ENCODE measurements at regions of chr18 and their contacts with region 1.

Region 1: GRCh38 chr18:10560450-10561045 is 34.7 kb downstream of the NAPG start:
- DNase-seq: peak; percentile 79
- H3K4me3 Mint-ChIP-seq: no peak overlapping the region
- H3K27ac Mint-ChIP-seq: no peak overlapping the region
- H3K4me1 Mint-ChIP-seq: no peaks in the 10 kb centered on the region
- H3K27me3 Mint-ChIP-seq: no peaks in the 10 kb centered on the region
- CTCF ChIP-seq: peak; percentile 78

Region 2: GRCh38 chr18:10715791-10716190 is 155.2 kb after region 1 on chr18:
- CTCF ChIA-PET with region 1: interaction called, 5 read pairs
- intact Hi-C with region 1: loop called (anchors 10 kb)
- DNase-seq: peak; percentile 46
- H3K4me3 Mint-ChIP-seq: no peak overlapping the region
- H3K27ac Mint-ChIP-seq: peak overlapping the region; percentile 38
- H3K4me1 Mint-ChIP-seq: peaks cover 11% of the 10 kb centered on the region
- H3K27me3 Mint-ChIP-seq: peaks cover 7% of the 10 kb centered on the region
- CTCF ChIP-seq: no peak

Region 3: GRCh38 chr18:10739152-10739551 is 178.6 kb after region 1 on chr18:
- CTCF ChIA-PET with region 1: no interaction called
- intact Hi-C with region 1: no loop called
- DNase-seq: no peak
- H3K4me3 Mint-ChIP-seq: no peak overlapping the region
- H3K27ac Mint-ChIP-seq: peak overlapping the region; percentile 67
- H3K4me1 Mint-ChIP-seq: no peaks in the 10 kb centered on the region
- H3K27me3 Mint-ChIP-seq: no peaks in the 10 kb centered on the region
- CTCF ChIP-seq: no peak

Region 4: GRCh38 chr18:10787293-10787901 is 226.8 kb after region 1 on chr18:
- CTCF ChIA-PET with region 1: interaction called, 4 read pairs
- intact Hi-C with region 1: loop called (anchors 5 kb)
- DNase-seq: peak; percentile 92
- H3K4me3 Mint-ChIP-seq: no peak overlapping the region
- H3K27ac Mint-ChIP-seq: no peak overlapping the region
- H3K4me1 Mint-ChIP-seq: no peaks in the 10 kb centered on the region
- H3K27me3 Mint-ChIP-seq: peaks cover 27% of the 10 kb centered on the region
- CTCF ChIP-seq: peak; percentile 66